HepG2 (cell line): ENCODE measurements at regions of chr17 and their contacts with region 1.

Region 1: GRCh38 chr17:40803617-40804082 is 3.9 kb upstream of the KRT28 start:
- DNase-seq: peak; percentile 77
- ATAC-seq: peak; percentile 99
- H3K4me3 ChIP-seq: no peak overlapping the region
- H3K27ac ChIP-seq: no peak overlapping the region
- H3K4me1 ChIP-seq: peaks cover 6% of the 10 kb centered on the region
- H3K27me3 ChIP-seq: peaks cover 0 to 11% of the 10 kb centered on the region in 2 experiments; a peak in 3 of 5 replicates
- CTCF ChIP-seq: peak; percentile 97
- EP300 ChIP-seq: no peak
- POLR2A ChIP-seq: no peak
- RAD21 ChIP-seq: peak; percentile 92

Region 2: DNA sequence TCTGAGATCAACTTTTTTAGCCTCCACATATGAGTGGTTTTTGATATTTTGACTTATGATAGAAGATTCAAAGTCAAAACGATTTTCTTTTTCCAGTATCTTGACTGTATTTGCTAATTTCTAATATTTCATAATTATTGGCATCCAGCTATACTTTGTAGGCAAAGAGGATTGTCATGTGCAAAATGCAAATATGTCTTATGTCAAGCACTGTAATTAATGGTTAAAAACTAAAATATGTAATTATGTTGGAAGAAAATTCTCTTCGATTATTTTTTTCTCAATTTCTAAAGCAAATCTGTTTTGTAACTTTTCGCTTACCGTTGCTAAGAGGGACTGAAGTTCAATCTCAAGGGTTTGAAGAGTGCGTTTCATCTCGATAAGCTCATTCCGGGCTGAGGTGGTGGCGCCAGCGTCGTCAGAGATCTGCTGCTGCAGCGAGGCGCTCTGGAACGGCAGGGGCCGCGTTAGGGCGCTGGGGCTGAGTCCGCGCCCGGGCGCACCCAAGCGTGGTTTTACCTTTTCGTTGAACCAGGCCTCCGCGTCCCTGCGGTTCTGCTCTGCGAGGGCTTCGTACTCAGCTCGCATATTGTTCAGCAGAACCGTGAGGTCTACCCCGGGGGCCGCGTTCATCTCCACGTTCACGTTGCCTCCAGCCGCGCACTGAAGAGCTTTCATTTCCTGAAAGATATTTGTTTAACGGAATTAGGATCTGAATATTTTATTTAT is 24.3 kb before region 1 on chr17:
- CTCF ChIA-PET with region 1: no interaction called
- POLR2A ChIA-PET with region 1: no interaction called
- in situ Hi-C with region 1: no loop called
- intact Hi-C with region 1: no loop called
- DNase-seq: peak; percentile 18
- ATAC-seq: peak; percentile 92
- H3K4me3 ChIP-seq: peak overlapping the region in 2 of 3 experiments; percentile 28 to 60; a peak in 4 of 6 replicates
- H3K27ac ChIP-seq: no peak overlapping the region
- H3K4me1 ChIP-seq: 0 out of 2 replicates have a peak, but pooled peaks cover 8% of the 10 kb centered on the region
- H3K27me3 ChIP-seq: peaks cover 0 to 39% of the 10 kb centered on the region in 2 experiments; a peak in 3 of 5 replicates
- CTCF ChIP-seq: peak; percentile 35
- EP300 ChIP-seq: no peak
- POLR2A ChIP-seq: no peak
- RAD21 ChIP-seq: no peak

Region 3: GRCh38 chr17:40854159-40854814 is 50.6 kb after region 1 on chr17:
- CTCF ChIA-PET with region 1: no interaction called
- POLR2A ChIA-PET with region 1: no interaction called
- in situ Hi-C with region 1: no loop called
- intact Hi-C with region 1: loop called (anchors 1 kb)
- DNase-seq: peak; percentile 55
- ATAC-seq: peak; percentile 46; the same call in 1 of the 3 replicates
- H3K4me3 ChIP-seq: no peak overlapping the region
- H3K27ac ChIP-seq: no peak overlapping the region
- H3K4me1 ChIP-seq: peaks cover 10% of the 10 kb centered on the region; the same call in 1 of the 2 replicates
- H3K27me3 ChIP-seq: 0 out of 5 replicates have a peak, but pooled peaks cover 0 to 3% of the 10 kb centered on the region in 2 experiments
- CTCF ChIP-seq: no peak
- EP300 ChIP-seq: peak in 1 of 2 experiments; percentile 66; a peak in 2 of 4 replicates
- POLR2A ChIP-seq: no peak
- RAD21 ChIP-seq: no peak

Region 4: GRCh38 chr17:41329281-41329948 is 525.8 kb after region 1 on chr17:
- CTCF ChIA-PET with region 1: interaction called, 7 read pairs
- POLR2A ChIA-PET with region 1: no interaction called
- in situ Hi-C with region 1: no loop called
- intact Hi-C with region 1: loop called (anchors 1 kb)
- DNase-seq: peak; percentile 52
- ATAC-seq: peak; percentile 87
- H3K4me3 ChIP-seq: no peak overlapping the region
- H3K27ac ChIP-seq: no peak overlapping the region
- H3K4me1 ChIP-seq: no peaks in the 10 kb centered on the region
- H3K27me3 ChIP-seq: peaks cover 0 to 18% of the 10 kb centered on the region in 2 experiments; a peak in 2 of 5 replicates
- CTCF ChIP-seq: peak; percentile 96
- EP300 ChIP-seq: no peak
- POLR2A ChIP-seq: no peak
- RAD21 ChIP-seq: peak; percentile 89

Region 5: GRCh38 chr17:41648411-41649195 is 845.0 kb after region 1 on chr17:
- CTCF ChIA-PET with region 1: interaction called, 14 read pairs
- POLR2A ChIA-PET with region 1: no interaction called
- in situ Hi-C with region 1: no loop called
- intact Hi-C with region 1: loop called (anchors 5 kb)
- DNase-seq: peak; percentile 75
- ATAC-seq: peak; percentile 89
- H3K4me3 ChIP-seq: peak overlapping the region; percentile 4 to 66 (median 37); a peak in 3 of 6 replicates
- H3K27ac ChIP-seq: no peak overlapping the region
- H3K4me1 ChIP-seq: peaks cover 33% of the 10 kb centered on the region
- H3K27me3 ChIP-seq: peaks cover 5 to 20% of the 10 kb centered on the region in 2 experiments; a peak in 3 of 5 replicates
- CTCF ChIP-seq: peak; percentile 98
- EP300 ChIP-seq: no peak
- POLR2A ChIP-seq: no peak
- RAD21 ChIP-seq: peak; percentile 83